ENCODE measurements at regions of chr7 and their contacts with region 1.

Region 1: GRCh38 chr7:74401137-74401859 is 52.4 kb upstream of the GTF2IRD1 start:
- DNase-seq: no peak
- H3K4me3 ChIP-seq: no peak overlapping the region
- H3K27ac ChIP-seq: no peak overlapping the region
- H3K27me3 ChIP-seq: no peaks in the 10 kb centered on the region
- CTCF ChIP-seq: peak; percentile 98

Region 2: DNA sequence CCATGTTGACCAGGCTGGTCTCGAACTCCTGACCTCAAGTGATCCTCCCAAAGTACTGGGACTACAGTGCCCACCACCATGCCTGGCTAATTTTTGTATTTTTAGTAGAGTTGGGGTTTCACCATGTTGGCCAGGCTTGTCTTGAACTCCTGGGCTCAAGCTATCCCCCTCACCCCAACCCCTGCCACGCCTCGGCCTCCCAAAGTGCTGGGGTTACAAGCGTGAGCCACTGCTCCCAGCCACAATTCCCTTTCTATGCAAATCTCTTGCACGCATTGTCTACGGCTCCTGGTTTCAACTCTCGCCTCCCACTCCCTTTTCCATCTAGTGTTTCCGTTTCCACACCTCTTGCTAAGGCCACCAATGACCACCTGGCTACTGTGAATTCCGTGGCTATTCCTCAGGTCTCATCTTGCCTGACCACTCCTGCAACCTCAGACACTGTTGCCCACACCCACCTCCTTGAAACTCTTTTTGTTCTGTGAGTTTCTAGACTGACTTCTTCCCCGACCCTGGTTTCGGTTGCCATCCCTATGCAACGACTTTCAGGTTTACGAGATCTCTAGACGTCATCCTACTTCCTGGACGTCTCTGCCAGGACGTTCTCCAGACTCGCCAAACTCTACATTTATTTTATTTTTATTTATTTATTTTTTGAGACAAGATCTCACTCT is 634.6 kb before region 1 on chr7:
- CTCF ChIA-PET with region 1: no interaction called
- POLR2A ChIA-PET with region 1: interaction called, 13 read pairs
- DNase-seq: no peak
- H3K4me3 ChIP-seq: no peak overlapping the region
- H3K27ac ChIP-seq: no peak overlapping the region
- H3K27me3 ChIP-seq: peaks cover 37% of the 10 kb centered on the region
- CTCF ChIP-seq: no peak

Region 3: DNA sequence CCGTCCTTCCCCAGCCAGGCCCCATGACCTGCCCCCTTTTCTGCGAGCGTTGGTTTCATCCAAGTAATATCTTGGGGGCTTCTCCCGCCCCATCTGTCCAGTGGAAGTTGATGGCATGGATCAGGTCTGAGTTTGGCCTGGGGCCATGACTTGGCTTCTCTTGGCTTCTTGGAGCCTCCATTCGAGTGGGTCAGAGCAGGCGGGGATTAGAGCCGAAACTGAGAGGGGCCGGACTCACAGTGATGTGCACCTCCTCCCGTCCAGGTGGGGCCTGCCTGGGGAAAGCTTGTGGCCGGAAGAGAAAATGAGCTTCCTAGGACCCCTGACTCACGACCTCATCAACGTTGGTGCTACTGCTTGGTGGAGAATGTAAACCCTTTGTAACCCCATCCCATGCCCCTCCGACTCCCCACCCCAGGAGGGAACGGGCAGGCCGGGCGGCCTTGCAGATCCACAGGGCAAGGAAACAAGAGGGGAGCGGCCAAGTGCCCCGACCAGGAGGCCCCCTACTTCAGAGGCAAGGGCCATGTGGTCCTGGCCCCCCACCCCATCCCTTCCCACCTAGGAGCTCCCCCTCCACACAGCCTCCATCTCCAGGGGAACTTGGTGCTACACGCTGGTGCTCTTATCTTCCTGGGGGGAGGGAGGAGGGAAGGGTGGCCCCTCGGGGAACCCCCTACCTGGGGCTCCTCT is 332.8 kb before region 1 on chr7:
- CTCF ChIA-PET with region 1: interaction called, 18 read pairs
- POLR2A ChIA-PET with region 1: interaction called, 4 read pairs
- DNase-seq: no peak
- H3K4me3 ChIP-seq: no peak overlapping the region
- H3K27ac ChIP-seq: no peak overlapping the region
- H3K27me3 ChIP-seq: no peaks in the 10 kb centered on the region
- CTCF ChIP-seq: no peak

Region 4: DNA sequence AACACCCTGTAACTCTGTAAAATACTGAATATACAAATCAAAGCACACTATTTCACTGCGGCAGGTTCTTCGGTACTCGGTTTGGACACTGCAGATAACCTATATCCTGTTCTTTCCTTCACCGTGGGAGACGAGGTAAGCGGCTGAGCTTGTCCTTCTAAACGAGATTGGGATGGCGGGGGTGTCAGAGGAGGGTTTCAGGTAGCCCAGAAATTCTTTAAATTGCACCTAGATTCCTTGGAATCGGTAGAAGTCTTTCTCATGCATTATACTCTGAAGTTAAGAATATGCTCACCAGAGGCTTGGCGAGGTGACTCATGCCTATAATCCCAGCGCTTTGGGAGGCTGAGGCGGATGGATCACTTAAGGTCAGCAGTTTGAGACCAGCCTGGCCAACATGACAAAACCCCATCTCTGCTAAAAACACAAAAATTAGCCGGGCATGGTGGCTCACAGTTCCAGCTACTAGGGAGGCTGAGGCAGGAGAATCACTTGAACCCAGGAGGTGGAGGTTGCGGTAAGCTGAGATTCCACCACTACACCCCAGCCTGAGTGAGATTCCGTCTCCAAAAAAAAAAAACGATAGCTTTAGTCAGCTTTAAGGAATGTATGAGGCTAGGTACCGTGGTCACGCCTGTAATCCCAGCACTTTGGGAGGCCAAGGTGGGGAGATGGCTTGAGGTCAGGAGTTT is 201.6 kb before region 1 on chr7:
- CTCF ChIA-PET with region 1: interaction called, 168 read pairs
- POLR2A ChIA-PET with region 1: no interaction called
- DNase-seq: no peak
- H3K4me3 ChIP-seq: no peak overlapping the region
- H3K27ac ChIP-seq: no peak overlapping the region
- H3K27me3 ChIP-seq: no peaks in the 10 kb centered on the region
- CTCF ChIP-seq: no peak

Region 5: GRCh38 chr7:74312418-74313021 is 88.8 kb before region 1 on chr7:
- CTCF ChIA-PET with region 1: no interaction called
- POLR2A ChIA-PET with region 1: no interaction called
- DNase-seq: no peak
- H3K4me3 ChIP-seq: no peak overlapping the region
- H3K27ac ChIP-seq: no peak overlapping the region
- H3K27me3 ChIP-seq: no peaks in the 10 kb centered on the region
- CTCF ChIP-seq: no peak

Region 6: GRCh38 chr7:74365322-74366022 is 35.8 kb before region 1 on chr7:
- CTCF ChIA-PET with region 1: no interaction called
- POLR2A ChIA-PET with region 1: no interaction called
- DNase-seq: no peak
- H3K4me3 ChIP-seq: no peak overlapping the region
- H3K27ac ChIP-seq: no peak overlapping the region
- H3K27me3 ChIP-seq: no peaks in the 10 kb centered on the region
- CTCF ChIP-seq: no peak

Region 7: GRCh38 chr7:74376256-74377036 is 24.9 kb before region 1 on chr7:
- CTCF ChIA-PET with region 1: interaction called, 13 read pairs
- POLR2A ChIA-PET with region 1: no interaction called
- DNase-seq: no peak
- H3K4me3 ChIP-seq: no peak overlapping the region
- H3K27ac ChIP-seq: no peak overlapping the region
- H3K27me3 ChIP-seq: no peaks in the 10 kb centered on the region
- CTCF ChIP-seq: no peak

Region 8: DNA sequence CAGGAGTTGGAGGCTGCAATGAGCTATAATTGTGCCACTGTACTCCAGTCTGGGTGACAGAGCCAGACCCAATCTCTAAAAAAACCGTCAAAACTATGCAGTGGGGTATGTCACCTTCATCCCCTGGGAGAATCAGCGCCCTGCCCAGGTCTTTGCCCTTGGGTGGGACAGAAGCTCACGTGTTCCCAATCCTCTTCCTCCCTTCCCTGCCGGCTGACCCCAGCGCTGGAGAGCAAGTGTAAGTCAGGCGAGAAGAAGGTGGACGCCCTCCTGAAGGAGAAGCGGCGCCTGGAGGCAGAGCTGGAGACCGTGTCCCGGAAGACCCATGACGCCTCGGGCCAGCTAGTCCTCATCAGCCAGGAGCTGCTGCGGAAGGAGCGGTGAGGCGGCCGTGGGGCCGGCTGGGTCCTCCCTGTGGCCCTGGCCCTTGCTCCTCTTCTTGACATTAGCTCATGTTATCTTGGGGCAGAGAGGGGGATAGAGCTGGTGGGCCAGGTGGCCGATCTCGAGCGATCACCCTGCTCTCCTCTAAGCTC is 12.3 kb before region 1 on chr7:
- CTCF ChIA-PET with region 1: interaction called, 12 read pairs
- POLR2A ChIA-PET with region 1: no interaction called
- DNase-seq: no peak
- H3K4me3 ChIP-seq: no peak overlapping the region
- H3K27ac ChIP-seq: no peak overlapping the region
- H3K27me3 ChIP-seq: no peaks in the 10 kb centered on the region
- CTCF ChIP-seq: no peak

Region 9: DNA sequence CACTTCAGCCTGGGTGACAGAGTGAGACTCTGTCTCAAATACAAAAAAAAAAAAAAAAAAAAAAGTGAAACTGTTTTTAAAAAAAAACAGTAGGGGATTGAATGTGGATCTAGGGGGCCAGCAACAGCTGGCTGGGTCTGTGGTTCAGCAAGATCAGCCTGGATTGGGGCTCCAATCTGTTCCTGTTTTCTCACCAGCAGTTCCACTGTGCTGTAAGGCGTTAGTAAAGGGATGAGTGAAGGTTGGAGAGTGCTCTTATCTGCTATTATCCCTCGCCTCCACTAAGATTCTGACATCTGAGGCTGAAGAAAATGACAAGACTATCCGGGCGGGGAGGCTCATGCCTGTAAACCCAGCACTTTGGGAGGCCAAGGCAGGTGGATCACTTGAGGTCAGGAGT is 10.8 kb after region 1 on chr7:
- CTCF ChIA-PET with region 1: interaction called, 12 read pairs
- POLR2A ChIA-PET with region 1: no interaction called
- DNase-seq: no peak
- H3K4me3 ChIP-seq: no peak overlapping the region
- H3K27ac ChIP-seq: no peak overlapping the region
- H3K27me3 ChIP-seq: no peaks in the 10 kb centered on the region
- CTCF ChIP-seq: no peak

Measured in AG04450 (cell line).